ENCODE measurements at regions of chr7 and their contacts with region 1.

Region 1: GRCh38 chr7:100444311-100445278 is 8.3 kb upstream of the PPP1R35 start:
- DNase-seq: peak; percentile 38 to 63 (median 60)
- H3K4me3 ChIP-seq: peak overlapping the region in 2 of 7 experiments; percentile 1 to 36
- H3K27ac ChIP-seq: peak overlapping the region in 1 of 2 experiments; percentile 62
- H3K4me1 ChIP-seq: peaks cover 2 to 30% (median 21%) of the 10 kb centered on the region in 4 experiments
- H3K27me3 ChIP-seq: no peaks in the 10 kb centered on the region

Region 2: GRCh38 chr7:100428199-100428966 is 16.2 kb before region 1 on chr7 and contains the start of gene ZCWPW1:
- CTCF ChIA-PET with region 1: interaction called, 160 read pairs
- POLR2A ChIA-PET with region 1: interaction called, 27 read pairs
- DNase-seq: peak; percentile 98 to 99 (median 98)
- H3K4me3 ChIP-seq: peak within 1 kb of the TSS; percentile 81 to 91 (median 82)
- H3K27ac ChIP-seq: peak within 1 kb of the TSS; percentile 99 to 100
- H3K4me1 ChIP-seq: peaks cover 4 to 32% (median 29%) of the 10 kb centered on the region in 4 experiments
- H3K27me3 ChIP-seq: no peaks in the 10 kb centered on the region

Measured in common myeloid progenitor, CD34-positive (primary cell).